H1 (cell line): ENCODE measurements at regions of chr7 and their contacts with region 1.

Region 1: DNA sequence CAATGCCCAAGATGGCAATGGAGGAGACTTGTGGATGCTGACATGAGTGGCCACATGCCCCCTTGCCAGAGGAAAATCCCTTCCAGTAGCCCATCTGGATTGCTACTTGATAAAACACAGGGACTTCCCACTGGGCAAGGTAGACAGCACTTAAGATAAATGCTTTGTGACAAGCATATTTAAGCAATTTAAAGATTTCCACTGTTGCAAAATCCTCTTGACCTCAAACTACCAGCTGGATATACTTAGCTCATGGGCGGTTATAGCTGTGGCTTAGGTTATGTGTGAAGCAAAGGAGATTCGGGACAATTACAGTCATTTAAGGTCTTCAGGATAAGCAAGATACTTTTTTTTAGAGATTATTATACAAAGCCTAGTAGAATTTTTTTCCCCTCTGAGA is 238.1 kb downstream of the BMPER start:
- DNase-seq: no peak
- H3K4me3 ChIP-seq: no peak overlapping the region
- H3K27ac ChIP-seq: no peak overlapping the region
- H3K4me1 ChIP-seq: peaks cover 0 to 6% (median 2%) of the 10 kb centered on the region in 4 experiments; a peak in 6 of 7 replicates
- H3K27me3 ChIP-seq: no peaks in the 10 kb centered on the region
- CTCF ChIP-seq: no peak
- EP300 ChIP-seq: no peak
- POLR2A ChIP-seq: no peak
- RAD21 ChIP-seq: no peak

Region 2: DNA sequence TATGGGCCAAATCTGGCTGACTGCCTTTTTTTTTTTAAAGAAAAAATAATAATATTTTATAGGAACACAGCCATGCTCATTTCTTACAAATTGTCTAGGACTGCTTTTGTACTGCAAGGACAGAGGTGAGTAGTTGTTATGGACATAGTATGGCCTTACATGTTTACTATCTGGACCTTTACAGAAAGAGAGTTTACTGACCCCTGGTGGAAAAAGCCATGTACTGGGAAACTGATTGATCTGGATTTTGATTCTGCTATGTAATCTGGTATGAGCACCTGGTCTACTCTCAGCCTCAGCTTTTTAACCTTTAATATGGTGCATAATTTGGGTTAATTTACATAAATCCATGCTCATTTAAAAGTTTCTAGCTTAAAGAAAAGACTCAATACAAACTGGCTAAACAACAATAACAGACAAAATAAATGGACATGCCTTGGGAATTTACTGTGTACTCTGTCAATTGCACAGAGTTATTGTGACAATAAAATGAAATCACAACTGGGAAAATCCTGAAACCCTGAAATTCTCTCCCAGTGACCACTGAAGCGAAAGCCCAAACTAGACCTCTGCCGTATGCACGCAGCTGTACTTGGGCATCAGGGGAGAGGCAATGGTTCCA is 22.6 kb after region 1 on chr7:
- CTCF ChIA-PET with region 1: interaction called, 197 read pairs
- POLR2A ChIA-PET with region 1: no interaction called
- DNase-seq: no peak
- H3K4me3 ChIP-seq: no peak overlapping the region
- H3K27ac ChIP-seq: no peak overlapping the region
- H3K4me1 ChIP-seq: no peaks in the 10 kb centered on the region
- H3K27me3 ChIP-seq: no peaks in the 10 kb centered on the region
- CTCF ChIP-seq: peak in 2 of 3 experiments; percentile 55 to 76; a peak in 3 of 4 replicates
- EP300 ChIP-seq: no peak
- POLR2A ChIP-seq: no peak
- RAD21 ChIP-seq: peak; percentile 64 to 70